ENCODE measurements at regions of chr1 and their contacts with region 1.

Region 1: GRCh38 chr1:236303687-236304086 is 21.9 kb upstream of the ERO1B start:
- DNase-seq: no peak
- ATAC-seq: no peak
- H3K4me3 ChIP-seq: no peak overlapping the region
- H3K27ac ChIP-seq: no peak overlapping the region
- H3K4me1 ChIP-seq: no peaks in the 10 kb centered on the region
- H3K27me3 ChIP-seq: no peaks in the 10 kb centered on the region
- CTCF ChIP-seq: no peak

Region 2: GRCh38 chr1:236429715-236430274 is 126.1 kb after region 1 on chr1:
- CTCF ChIA-PET with region 1: no interaction called
- POLR2A ChIA-PET with region 1: interaction called, 10 read pairs
- intact Hi-C with region 1: no loop called
- DNase-seq: no peak
- ATAC-seq: no peak
- H3K4me3 ChIP-seq: no peak overlapping the region
- H3K27ac ChIP-seq: no peak overlapping the region
- H3K4me1 ChIP-seq: no peaks in the 10 kb centered on the region
- H3K27me3 ChIP-seq: no peaks in the 10 kb centered on the region
- CTCF ChIP-seq: no peak

Measured in PC-3 (cell line).